Natural killer cell (primary cell): ENCODE measurements at regions of chr19 and their contacts with region 1.

Region 1: DNA sequence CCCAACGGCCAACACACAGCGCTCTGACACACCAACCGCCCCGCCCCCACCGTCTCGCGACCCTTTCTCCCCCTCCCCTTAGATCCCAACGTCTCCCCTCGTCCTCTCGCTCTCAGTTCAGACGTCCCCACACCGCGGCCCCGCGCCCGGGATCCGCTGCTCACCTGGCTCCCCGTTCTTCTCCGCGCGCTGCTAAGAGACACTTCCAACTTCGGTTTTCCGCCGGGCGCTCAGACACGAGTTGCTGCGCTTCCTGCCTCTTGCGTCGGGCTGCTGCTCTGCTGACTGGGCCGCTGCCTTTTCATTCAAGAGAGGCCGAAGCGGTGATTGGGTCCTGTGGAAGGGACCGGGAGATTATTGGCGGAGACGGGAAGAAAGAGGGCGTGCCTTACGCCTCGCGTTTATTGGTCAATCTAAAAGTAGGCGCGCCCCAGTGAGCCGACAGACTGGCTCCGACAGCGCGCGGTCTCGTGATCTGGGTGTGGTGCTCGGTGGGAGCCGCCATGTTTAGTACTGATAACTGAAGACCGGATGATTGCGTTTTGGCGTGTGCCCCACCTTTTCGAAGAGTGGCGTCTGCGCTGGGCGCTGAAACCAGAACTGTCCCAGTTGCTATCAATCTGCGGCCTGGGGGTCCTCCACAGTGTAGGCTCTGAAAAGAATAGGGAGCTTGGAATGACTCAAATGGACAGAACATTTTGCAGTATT is at the start of gene DDX39A:
- DNase-seq: peak; percentile 94 to 99
- ATAC-seq: peak; percentile 80 to 94 (median 82)
- H3K4me3 ChIP-seq: peak within 1 kb of the TSS; percentile 69
- H3K4me3 Mint-ChIP-seq: peak within 1 kb of the TSS; percentile 94
- H3K27ac ChIP-seq: peak within 1 kb of the TSS; percentile 93
- H3K27ac Mint-ChIP-seq: peak within 1 kb of the TSS; percentile 93 to 98
- H3K4me1 ChIP-seq: peaks cover 45% of the 10 kb centered on the region
- H3K4me1 Mint-ChIP-seq: peaks cover 40 to 45% of the 10 kb centered on the region in 2 donors
- H3K27me3 ChIP-seq: no peaks in the 10 kb centered on the region
- H3K27me3 Mint-ChIP-seq: no peaks in the 10 kb centered on the region
- CTCF ChIP-seq: no peak
- total RNA-seq, gene DDX39A: 397 to 569 (median 557) TPM

Region 2: GRCh38 chr19:14337510-14337909 is 81.8 kb before region 1 on chr19:
- intact Hi-C with region 1: no loop called
- DNase-seq: peak; percentile 31 to 66
- ATAC-seq: peak; percentile 67 to 80 (median 78)
- H3K4me3 ChIP-seq: no peak overlapping the region
- H3K4me3 Mint-ChIP-seq: no peak overlapping the region
- H3K27ac ChIP-seq: no peak overlapping the region
- H3K27ac Mint-ChIP-seq: no peak overlapping the region
- H3K4me1 ChIP-seq: peaks cover 8% of the 10 kb centered on the region
- H3K4me1 Mint-ChIP-seq: no peaks in the 10 kb centered on the region
- H3K27me3 ChIP-seq: no peaks in the 10 kb centered on the region
- H3K27me3 Mint-ChIP-seq: no peaks in the 10 kb centered on the region
- CTCF ChIP-seq: no peak

Region 3: GRCh38 chr19:14369399-14370168 is 49.7 kb before region 1 on chr19:
- intact Hi-C with region 1: loop called (anchors 1 kb)
- DNase-seq: peak; percentile 83 to 96
- ATAC-seq: peak; percentile 62 to 85 (median 77)
- H3K4me3 ChIP-seq: peak overlapping the region; percentile 41
- H3K4me3 Mint-ChIP-seq: peak overlapping the region; percentile 91
- H3K27ac ChIP-seq: peak overlapping the region; percentile 99
- H3K27ac Mint-ChIP-seq: peak overlapping the region; percentile 90 to 100
- H3K4me1 ChIP-seq: peaks cover 98% of the 10 kb centered on the region
- H3K4me1 Mint-ChIP-seq: peaks cover 58 to 69% of the 10 kb centered on the region in 2 donors
- H3K27me3 ChIP-seq: no peaks in the 10 kb centered on the region
- H3K27me3 Mint-ChIP-seq: no peaks in the 10 kb centered on the region
- CTCF ChIP-seq: no peak

Region 4: DNA sequence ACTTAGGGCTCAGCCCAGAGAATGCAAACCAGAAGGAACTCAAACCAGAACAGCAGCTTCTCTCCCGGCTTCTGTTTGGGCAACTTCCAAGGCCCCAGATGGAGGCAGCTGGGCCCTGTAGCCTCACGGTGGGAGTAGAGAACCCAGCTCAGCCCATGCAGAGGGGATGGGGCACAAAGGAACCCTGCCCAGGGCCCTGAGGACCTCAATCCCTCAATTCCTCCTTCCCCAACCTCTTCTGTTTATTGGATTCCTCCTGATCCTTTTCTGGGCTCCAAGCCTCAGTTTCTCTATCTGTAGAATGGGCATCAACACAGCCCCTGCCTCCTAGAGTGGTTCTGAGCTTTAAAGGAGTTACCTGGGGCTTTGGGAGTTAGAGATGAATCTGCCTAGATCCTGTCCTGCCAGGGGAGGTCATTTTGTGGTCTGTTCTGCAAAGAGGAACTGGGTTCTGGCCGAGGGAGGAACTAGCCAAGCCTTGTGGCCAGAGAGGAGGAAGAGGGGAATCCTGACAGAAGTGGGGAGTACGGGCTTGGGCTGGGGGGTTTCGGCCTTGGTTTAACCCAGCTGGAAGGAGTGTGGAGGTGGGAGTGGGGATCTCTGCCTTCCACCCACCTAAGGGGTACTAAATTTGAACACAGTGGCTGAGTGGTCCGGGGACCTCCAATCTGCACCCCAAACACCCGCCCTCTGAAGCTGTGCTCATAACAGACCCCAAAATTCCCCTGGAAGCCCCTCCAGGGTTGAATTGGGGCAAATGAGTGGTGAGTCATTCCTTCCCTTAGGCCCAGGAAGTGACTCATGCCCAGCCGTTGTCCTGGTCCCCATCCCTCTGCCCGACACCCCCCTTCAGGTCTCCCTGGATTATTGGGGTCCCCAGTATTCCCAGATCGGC is 35.4 kb before region 1 on chr19:
- intact Hi-C with region 1: loop called (anchors 1 kb)
- DNase-seq: peak; percentile 70 to 82
- ATAC-seq: peak; percentile 20 to 28 (median 21)
- H3K4me3 ChIP-seq: peak overlapping the region; percentile 71
- H3K4me3 Mint-ChIP-seq: peak overlapping the region; percentile 93
- H3K27ac ChIP-seq: peak overlapping the region; percentile 91
- H3K27ac Mint-ChIP-seq: peak overlapping the region; percentile 91 to 94
- H3K4me1 ChIP-seq: peaks cover 72% of the 10 kb centered on the region
- H3K4me1 Mint-ChIP-seq: peaks cover 47 to 55% of the 10 kb centered on the region in 2 donors
- H3K27me3 ChIP-seq: no peaks in the 10 kb centered on the region
- H3K27me3 Mint-ChIP-seq: no peaks in the 10 kb centered on the region
- CTCF ChIP-seq: no peak

Region 5: GRCh38 chr19:14432791-14433553 is 13.7 kb after region 1 on chr19 and contains the start of gene PKN1:
- intact Hi-C with region 1: loop called (anchors 2 kb)
- DNase-seq: peak; percentile 56 to 68
- ATAC-seq: peak in 2 of 3 donors; percentile 6 to 31
- H3K4me3 ChIP-seq: peak within 1 kb of the TSS; percentile 72
- H3K4me3 Mint-ChIP-seq: peak within 1 kb of the TSS; percentile 90
- H3K27ac ChIP-seq: peak within 1 kb of the TSS; percentile 79
- H3K27ac Mint-ChIP-seq: peak within 1 kb of the TSS; percentile 97 to 100
- H3K4me1 ChIP-seq: peaks cover 48% of the 10 kb centered on the region
- H3K4me1 Mint-ChIP-seq: peaks cover 25 to 38% of the 10 kb centered on the region in 2 donors
- H3K27me3 ChIP-seq: no peaks in the 10 kb centered on the region
- H3K27me3 Mint-ChIP-seq: no peaks in the 10 kb centered on the region
- CTCF ChIP-seq: no peak
- total RNA-seq, gene PKN1: 323 to 351 (median 350) TPM

Region 6: DNA sequence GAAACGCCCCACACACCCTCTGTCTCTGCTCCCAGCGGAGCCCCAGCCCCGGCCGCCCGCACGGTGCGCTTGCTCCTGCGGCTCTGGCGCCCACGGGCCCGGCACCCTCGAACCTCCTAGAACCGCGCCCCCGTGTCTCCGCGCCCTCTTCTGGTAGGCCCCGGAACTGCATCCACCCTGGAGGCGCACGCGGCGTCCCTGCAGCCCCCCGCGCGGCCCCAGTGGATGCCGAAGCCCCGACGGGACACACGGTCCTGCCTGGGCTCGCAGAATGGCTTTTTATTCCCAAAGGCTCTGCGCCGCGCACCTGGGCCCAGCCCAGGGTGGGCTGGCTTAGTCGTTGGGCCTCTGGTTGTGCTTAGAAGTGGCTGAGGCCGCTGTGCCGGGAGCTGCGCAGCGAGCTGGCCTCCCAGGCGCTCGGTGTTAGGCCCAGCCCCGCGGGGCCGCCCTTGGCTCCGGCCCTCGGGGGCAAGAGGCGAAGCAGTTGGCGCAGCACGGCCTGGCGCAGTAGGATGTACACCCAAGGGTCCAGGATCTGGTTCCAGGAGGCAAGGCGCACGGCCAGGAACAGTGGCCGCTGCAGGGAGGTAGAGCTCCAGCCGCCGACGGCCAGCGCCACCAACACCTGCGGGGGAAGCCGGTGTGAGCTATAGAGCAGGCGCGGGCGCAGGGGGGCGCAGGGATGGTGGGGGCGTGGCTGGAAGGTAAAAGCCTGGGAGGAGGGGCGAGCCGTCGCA is 53.1 kb after region 1 on chr19:
- intact Hi-C with region 1: loop called (anchors 1 kb)
- DNase-seq: peak; percentile 90
- ATAC-seq: peak; percentile 28 to 76 (median 48)
- H3K4me3 ChIP-seq: no peak overlapping the region
- H3K4me3 Mint-ChIP-seq: peak overlapping the region; percentile 64
- H3K27ac ChIP-seq: no peak overlapping the region
- H3K27ac Mint-ChIP-seq: peak overlapping the region; percentile 11 to 99
- H3K4me1 ChIP-seq: peaks cover 52% of the 10 kb centered on the region
- H3K4me1 Mint-ChIP-seq: peaks cover 29 to 51% of the 10 kb centered on the region in 2 donors
- H3K27me3 ChIP-seq: peaks cover 11% of the 10 kb centered on the region
- H3K27me3 Mint-ChIP-seq: peaks cover 0 to 11% of the 10 kb centered on the region in 2 donors
- CTCF ChIP-seq: peak; percentile 99

Region 7: GRCh38 chr19:14517840-14518505 is 98.7 kb after region 1 on chr19 and contains the start of gene DNAJB1:
- intact Hi-C with region 1: loop called (anchors 5 kb)
- DNase-seq: peak; percentile 71 to 76
- ATAC-seq: peak; percentile 40 to 72 (median 58)
- H3K4me3 ChIP-seq: peak within 1 kb of the TSS; percentile 99
- H3K4me3 Mint-ChIP-seq: peak within 1 kb of the TSS; percentile 95
- H3K27ac ChIP-seq: peak within 1 kb of the TSS; percentile 99
- H3K27ac Mint-ChIP-seq: peak within 1 kb of the TSS; percentile 91 to 96
- H3K4me1 ChIP-seq: peaks cover 62% of the 10 kb centered on the region
- H3K4me1 Mint-ChIP-seq: peaks cover 41 to 61% of the 10 kb centered on the region in 2 donors
- H3K27me3 ChIP-seq: no peaks in the 10 kb centered on the region
- H3K27me3 Mint-ChIP-seq: no peaks in the 10 kb centered on the region
- CTCF ChIP-seq: no peak
- total RNA-seq, gene DNAJB1: 148 to 238 (median 192) TPM